ENCODE measurements at regions of chr3 and their contacts with region 1.

Region 1: DNA sequence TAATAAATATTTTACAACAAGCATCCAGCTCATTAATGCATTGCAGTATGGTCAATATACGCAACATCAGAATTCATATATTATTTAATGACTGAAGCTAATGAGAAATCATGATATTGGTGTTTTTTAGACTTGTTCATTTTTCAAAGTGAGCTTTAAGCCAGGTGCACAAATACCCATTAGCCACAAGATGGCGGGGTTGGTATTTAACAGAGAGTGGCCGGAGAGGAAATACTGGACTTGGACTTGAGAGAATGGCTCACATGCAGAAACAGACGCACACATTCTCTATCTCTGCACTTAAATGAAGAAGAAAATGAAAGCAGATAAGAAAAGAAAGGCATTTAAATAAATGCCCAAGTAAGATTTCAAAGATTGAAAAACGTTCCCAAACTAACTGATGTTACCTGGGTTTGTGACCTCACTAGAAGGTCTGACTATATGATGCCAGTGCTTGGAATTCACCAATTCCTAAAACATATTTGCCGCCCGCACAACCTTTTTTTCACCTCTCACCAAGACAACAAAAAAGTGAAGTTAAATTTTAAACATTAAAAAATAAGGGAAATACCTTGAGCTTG is 21.2 kb upstream of the CRBN start:
- DNase-seq: peak; percentile 34 to 39
- H3K4me3 ChIP-seq: no peak overlapping the region
- H3K27ac ChIP-seq: no peak overlapping the region
- H3K4me1 ChIP-seq: no peaks in the 10 kb centered on the region
- H3K27me3 ChIP-seq: no peaks in the 10 kb centered on the region
- CTCF ChIP-seq: peak; percentile 60 to 75 (median 67)
- POLR2A ChIP-seq: no peak

Region 2: GRCh38 chr3:3160826-3161225 is 39.9 kb before region 1 on chr3:
- intact Hi-C with region 1: no loop called
- DNase-seq: no peak
- H3K4me3 ChIP-seq: no peak overlapping the region
- H3K27ac ChIP-seq: no peak overlapping the region
- H3K4me1 ChIP-seq: no peaks in the 10 kb centered on the region
- H3K27me3 ChIP-seq: no peaks in the 10 kb centered on the region
- CTCF ChIP-seq: no peak
- POLR2A ChIP-seq: no peak

Region 3: GRCh38 chr3:4271834-4272233 is 1071.1 kb after region 1 on chr3:
- intact Hi-C with region 1: loop called (anchors 10 kb)
- DNase-seq: no peak
- H3K4me3 ChIP-seq: no peak overlapping the region
- H3K27ac ChIP-seq: no peak overlapping the region
- H3K4me1 ChIP-seq: no peaks in the 10 kb centered on the region
- H3K27me3 ChIP-seq: no peaks in the 10 kb centered on the region
- CTCF ChIP-seq: peak in 3 of 4 experiments; percentile 10 to 35 (median 33)
- POLR2A ChIP-seq: no peak